Breast epithelium (tissue), 4 donors: ENCODE measurements at regions of chr12 and their contacts with region 1.

Region 1: GRCh38 chr12:59723517-59723916 is 127.7 kb downstream of the SLC16A7 start:
- DNase-seq: no peak
- H3K4me3 ChIP-seq: no peak overlapping the region
- H3K27ac ChIP-seq: no peak overlapping the region
- H3K4me1 ChIP-seq: no peaks in the 10 kb centered on the region
- H3K27me3 ChIP-seq: no peaks in the 10 kb centered on the region
- CTCF ChIP-seq: no peak
- POLR2A ChIP-seq: no peak

Region 2: DNA sequence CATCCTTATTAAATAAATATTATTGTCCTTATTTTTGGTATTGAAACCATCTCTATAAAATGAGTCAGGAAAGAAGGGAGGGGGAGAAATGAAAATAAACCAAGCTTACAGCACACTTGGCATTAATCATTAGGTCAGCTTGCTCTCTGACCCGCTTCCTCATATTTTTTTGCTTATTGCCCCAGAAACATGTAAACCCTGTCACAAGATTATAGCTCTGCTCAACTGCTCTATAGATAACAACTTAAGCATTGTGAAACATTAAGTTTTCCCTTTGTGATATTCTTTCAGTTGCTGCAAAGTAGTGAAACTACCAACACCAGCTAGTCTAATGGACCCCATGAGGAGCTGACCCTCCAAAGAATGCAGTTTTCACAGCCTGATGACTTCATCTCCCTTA is 691.8 kb after region 1 on chr12:
- intact Hi-C with region 1: loop called (anchors 5 kb)
- DNase-seq: no peak
- H3K4me3 ChIP-seq: no peak overlapping the region
- H3K27ac ChIP-seq: no peak overlapping the region
- H3K4me1 ChIP-seq: no peaks in the 10 kb centered on the region
- H3K27me3 ChIP-seq: no peaks in the 10 kb centered on the region
- CTCF ChIP-seq: no peak
- POLR2A ChIP-seq: no peak